ENCODE measurements at regions of chr7 and their contacts with region 1.

Region 1: GRCh38 chr7:17940302-17940883 is at the start of gene SNX13:
- DNase-seq: peak; percentile 90 to 94
- ATAC-seq: peak; percentile 97 to 99 (median 98)
- H3K4me3 ChIP-seq: peak within 1 kb of the TSS; percentile 75 to 96 (median 90)
- H3K27ac ChIP-seq: peak within 1 kb of the TSS; percentile 76 to 98 (median 96)
- H3K4me1 ChIP-seq: peaks cover 0 to 47% (median 32%) of the 10 kb centered on the region in 9 donors
- H3K27me3 ChIP-seq: no peaks in the 10 kb centered on the region
- CTCF ChIP-seq: peak in 5 of 9 donors; percentile 31 to 73 (median 51)
- total RNA-seq, gene SNX13: 40.6 to 57.7 (median 46.3) TPM

Region 2: GRCh38 chr7:16926283-16926682 is 1014.1 kb before region 1 on chr7:
- intact Hi-C with region 1: no loop called
- DNase-seq: peak in 1 of 2 donors; percentile 21
- ATAC-seq: peak in 7 of 8 donors; percentile 52 to 87 (median 81)
- H3K4me3 ChIP-seq: no peak overlapping the region
- H3K27ac ChIP-seq: no peak overlapping the region
- H3K4me1 ChIP-seq: peaks cover 0 to 15% (median 0%) of the 10 kb centered on the region in 9 donors
- H3K27me3 ChIP-seq: no peaks in the 10 kb centered on the region
- CTCF ChIP-seq: peak in 8 of 9 donors; percentile 46 to 76 (median 66)

Region 3: DNA sequence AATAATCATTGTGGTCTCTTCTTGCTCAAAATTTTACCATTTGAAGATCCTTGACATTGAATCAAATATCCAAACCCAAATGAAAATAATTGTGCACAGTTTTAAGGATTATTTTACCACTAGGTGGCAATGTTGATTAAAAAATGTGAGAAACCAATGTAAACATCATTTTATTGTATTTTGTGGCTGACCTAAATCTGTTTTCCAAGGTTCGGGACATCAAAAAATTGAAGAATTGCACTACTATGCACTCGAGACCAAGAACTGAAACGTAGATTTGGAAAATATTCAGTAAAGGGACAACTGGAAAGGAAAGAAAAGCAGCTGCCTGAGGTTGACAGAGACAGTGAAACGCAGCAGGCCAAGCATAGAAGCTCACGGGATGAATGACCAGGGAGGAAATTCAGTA is 259.4 kb before region 1 on chr7:
- intact Hi-C with region 1: loop called in 1 of 10 experiments (anchors 10 kb)
- DNase-seq: no peak
- ATAC-seq: peak in 3 of 8 donors; percentile 36 to 43 (median 36)
- H3K4me3 ChIP-seq: no peak overlapping the region
- H3K27ac ChIP-seq: peak overlapping the region in 1 of 10 donors; percentile 58
- H3K4me1 ChIP-seq: peaks cover 0 to 46% (median 15%) of the 10 kb centered on the region in 9 donors
- H3K27me3 ChIP-seq: no peaks in the 10 kb centered on the region
- CTCF ChIP-seq: peak; percentile 33 to 77 (median 63)

Region 4: DNA sequence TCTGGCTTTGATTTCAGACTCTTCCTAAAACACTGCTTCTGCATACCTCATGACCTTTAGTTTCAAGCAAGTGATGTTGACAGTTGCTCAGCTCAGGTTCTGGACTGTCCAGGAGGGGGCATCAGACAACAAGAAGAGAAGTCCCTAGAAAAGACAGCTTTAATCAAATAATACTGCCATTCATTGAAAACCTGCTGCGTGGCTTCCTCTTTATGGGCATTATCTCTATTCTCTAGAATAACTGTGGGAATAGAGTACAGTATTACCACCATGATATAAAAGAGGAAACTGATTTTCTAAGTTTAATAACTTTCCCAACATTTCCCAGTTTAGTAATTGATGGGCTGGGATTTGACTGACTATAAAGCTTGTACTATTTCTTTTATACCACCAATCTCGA is 170.5 kb before region 1 on chr7:
- intact Hi-C with region 1: loop called in 2 of 10 experiments (anchors 10 kb)
- DNase-seq: peak in 1 of 2 donors; percentile 58
- ATAC-seq: peak in 6 of 8 donors; percentile 47 to 71 (median 64)
- H3K4me3 ChIP-seq: no peak overlapping the region
- H3K27ac ChIP-seq: no peak overlapping the region
- H3K4me1 ChIP-seq: peaks cover 5 to 42% (median 13%) of the 10 kb centered on the region in 9 donors
- H3K27me3 ChIP-seq: no peaks in the 10 kb centered on the region
- CTCF ChIP-seq: peak; percentile 25 to 79 (median 72)

Region 5: GRCh38 chr7:18429547-18429946 is 489.2 kb after region 1 on chr7:
- intact Hi-C with region 1: no loop called
- DNase-seq: no peak
- ATAC-seq: no peak
- H3K4me3 ChIP-seq: no peak overlapping the region
- H3K27ac ChIP-seq: no peak overlapping the region
- H3K4me1 ChIP-seq: peaks cover 0 to 11% (median 0%) of the 10 kb centered on the region in 9 donors
- H3K27me3 ChIP-seq: no peaks in the 10 kb centered on the region
- CTCF ChIP-seq: no peak